ENCODE measurements at regions of chr12 and their contacts with region 1.

Region 1: GRCh38 chr12:12999959-13000615 is at the start of gene HEBP1:
- DNase-seq: peak; percentile 100
- total RNA-seq, gene HEBP1: 44.3 TPM

Region 2: GRCh38 chr12:12813120-12814101 is 186.7 kb before region 1 on chr12 and contains the start of gene DDX47:
- intact Hi-C with region 1: loop called (anchors 10 kb)
- DNase-seq: peak; percentile 98
- total RNA-seq, gene DDX47: 25.5 TPM

Region 3: GRCh38 chr12:13100882-13101769 is 101.0 kb after region 1 on chr12:
- intact Hi-C with region 1: loop called (anchors 5 kb)
- DNase-seq: peak; percentile 94

Region 4: DNA sequence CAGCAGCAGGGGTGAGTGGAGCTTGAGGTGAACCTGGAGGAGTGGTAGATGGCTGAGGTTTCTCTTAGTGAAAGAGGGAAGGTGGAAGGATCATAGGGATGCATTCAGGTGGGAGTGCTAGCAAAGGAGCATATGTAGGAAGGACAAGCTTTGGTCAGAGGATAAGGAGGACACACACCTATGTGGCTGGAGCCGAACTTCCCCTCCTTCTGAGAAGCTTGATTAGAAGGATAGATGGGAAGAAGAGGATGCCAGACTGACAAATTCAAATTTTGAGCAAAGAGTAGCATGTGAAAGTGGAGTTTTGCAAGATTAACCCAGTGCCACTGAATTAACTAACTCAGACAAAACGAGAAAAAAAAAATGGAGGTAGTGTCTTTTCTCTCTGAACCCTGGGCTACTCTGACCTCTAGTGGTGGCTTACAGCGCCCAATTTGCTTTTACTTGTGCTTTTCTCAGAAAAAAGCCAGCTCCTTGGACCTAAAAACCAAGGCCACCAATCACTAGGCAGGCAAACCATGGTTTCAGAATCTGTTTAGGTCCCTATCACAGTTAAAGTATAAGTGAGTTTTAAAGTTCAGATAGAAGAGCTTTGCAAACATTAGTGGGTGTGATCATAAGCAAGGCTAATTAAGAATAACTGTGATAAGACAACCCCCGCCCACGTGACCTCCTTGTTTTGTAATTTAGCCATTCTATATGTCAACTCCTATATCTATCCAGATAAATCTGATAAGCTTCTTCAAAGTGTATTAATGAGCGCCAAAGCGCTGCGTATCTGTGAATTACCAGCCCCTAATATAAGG is 212.0 kb after region 1 on chr12:
- intact Hi-C with region 1: loop called (anchors 5 kb)
- DNase-seq: no peak

Measured in cardiac septum (tissue), 1 donor.